ENCODE measurements at regions of chr18 and their contacts with region 1.

Region 1: GRCh38 chr18:68847219-68847837 is 49.4 kb downstream of the CCDC102B start:
- DNase-seq: no peak
- H3K4me3 ChIP-seq: no peak overlapping the region
- H3K27ac ChIP-seq: no peak overlapping the region
- H3K4me1 ChIP-seq: no peaks in the 10 kb centered on the region
- H3K27me3 ChIP-seq: no peaks in the 10 kb centered on the region
- CTCF ChIP-seq: peak; percentile 53

Region 2: GRCh38 chr18:68588169-68588568 is 259.2 kb before region 1 on chr18:
- intact Hi-C with region 1: no loop called
- DNase-seq: no peak
- H3K4me3 ChIP-seq: no peak overlapping the region
- H3K27ac ChIP-seq: no peak overlapping the region
- H3K4me1 ChIP-seq: no peaks in the 10 kb centered on the region
- H3K27me3 ChIP-seq: no peaks in the 10 kb centered on the region
- CTCF ChIP-seq: no peak

Region 3: GRCh38 chr18:68714609-68715496 is 132.5 kb before region 1 on chr18 and contains the start of gene TMX3:
- intact Hi-C with region 1: no loop called
- DNase-seq: peak; percentile 91
- H3K4me3 ChIP-seq: peak within 1 kb of the TSS; percentile 97
- H3K27ac ChIP-seq: peak within 1 kb of the TSS; percentile 76
- H3K4me1 ChIP-seq: no peaks in the 10 kb centered on the region
- H3K27me3 ChIP-seq: no peaks in the 10 kb centered on the region
- CTCF ChIP-seq: no peak
- total RNA-seq, gene TMX3: 24.4 to 25.9 TPM

Region 4: GRCh38 chr18:69002233-69002632 is 154.9 kb after region 1 on chr18:
- intact Hi-C with region 1: no loop called
- DNase-seq: no peak
- H3K4me3 ChIP-seq: no peak overlapping the region
- H3K27ac ChIP-seq: no peak overlapping the region
- H3K4me1 ChIP-seq: no peaks in the 10 kb centered on the region
- H3K27me3 ChIP-seq: no peaks in the 10 kb centered on the region
- CTCF ChIP-seq: no peak

Region 5: DNA sequence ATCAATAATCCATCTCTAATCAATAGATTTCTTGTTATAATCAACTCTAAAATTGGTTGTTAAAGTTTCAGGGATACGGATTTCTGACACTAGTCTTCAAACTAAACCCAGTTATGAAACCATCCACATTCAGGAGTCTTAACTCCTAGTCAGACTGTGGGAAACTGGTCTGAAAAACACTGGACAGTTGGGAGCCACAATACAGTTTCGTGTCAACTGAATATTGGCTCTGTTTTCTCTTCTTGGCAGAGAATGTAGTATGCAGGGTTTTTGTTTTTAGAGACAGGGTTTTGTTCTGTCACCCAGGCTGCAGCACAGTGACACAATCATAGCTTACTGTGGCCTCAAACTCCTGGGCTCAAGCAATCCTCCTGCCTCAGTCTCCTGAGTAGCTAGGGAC is 1235.1 kb after region 1 on chr18:
- intact Hi-C with region 1: loop called (anchors 10 kb)
- DNase-seq: no peak
- H3K4me3 ChIP-seq: no peak overlapping the region
- H3K27ac ChIP-seq: no peak overlapping the region
- H3K4me1 ChIP-seq: no peaks in the 10 kb centered on the region
- H3K27me3 ChIP-seq: no peaks in the 10 kb centered on the region
- CTCF ChIP-seq: no peak

Measured in colonic mucosa (tissue), 4 donors.